RWPE1 (cell line): ENCODE measurements at regions of chr21 and their contacts with region 1.

Region 1: GRCh38 chr21:39533545-39534380 is 79.0 kb upstream of the B3GALT5 start:
- DNase-seq: no peak
- H3K27ac ChIP-seq: no peak overlapping the region
- CTCF ChIP-seq: no peak

Region 2: DNA sequence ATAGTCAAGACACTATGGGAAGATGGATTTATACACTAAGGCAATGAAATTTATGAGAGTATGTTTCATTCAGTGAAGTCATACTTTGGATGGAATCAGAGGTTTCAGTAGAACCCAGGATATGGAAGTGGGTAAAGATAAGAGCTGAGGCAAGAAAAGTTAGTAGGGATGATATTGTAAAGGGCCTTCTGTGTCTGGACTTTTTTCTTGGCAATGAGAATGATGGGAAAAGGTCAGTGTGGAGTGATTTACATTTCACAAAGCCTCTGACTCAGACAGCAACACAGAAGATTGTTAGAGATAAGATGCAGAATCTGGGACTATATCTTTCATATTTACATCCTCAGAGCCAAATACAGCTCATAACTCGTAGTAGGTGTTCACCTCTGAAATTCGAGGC is 49.8 kb before region 1 on chr21:
- CTCF ChIA-PET with region 1: no interaction called
- POLR2A ChIA-PET with region 1: no interaction called
- DNase-seq: no peak
- H3K27ac ChIP-seq: no peak overlapping the region
- CTCF ChIP-seq: no peak

Region 3: GRCh38 chr21:39518138-39518846 is 15.5 kb before region 1 on chr21:
- CTCF ChIA-PET with region 1: interaction called, 10 read pairs
- POLR2A ChIA-PET with region 1: no interaction called
- DNase-seq: peak; percentile 80
- H3K27ac ChIP-seq: no peak overlapping the region
- CTCF ChIP-seq: peak; percentile 90

Region 4: DNA sequence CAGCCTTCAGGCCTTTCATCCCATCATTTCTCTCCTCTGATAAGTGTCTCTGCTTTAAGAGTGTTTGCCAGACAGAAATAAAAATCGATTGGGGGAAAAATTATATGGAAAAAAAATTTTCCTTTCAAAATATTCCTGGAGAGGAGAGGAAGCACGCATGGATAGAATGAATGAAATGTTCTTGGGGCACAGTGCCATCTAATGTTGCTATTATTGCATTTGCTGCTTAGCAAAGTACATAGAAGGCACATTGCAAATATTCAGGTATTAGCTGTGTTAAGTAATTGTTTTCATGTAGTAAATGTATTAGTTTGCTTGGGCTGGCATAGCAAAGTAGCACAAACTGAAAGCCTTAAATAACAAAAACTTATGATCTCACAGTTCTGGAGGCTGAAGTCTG is 97.1 kb after region 1 on chr21:
- CTCF ChIA-PET with region 1: no interaction called
- POLR2A ChIA-PET with region 1: no interaction called
- DNase-seq: no peak
- H3K27ac ChIP-seq: no peak overlapping the region
- CTCF ChIP-seq: no peak